GM10248 (cell line): ENCODE measurements at regions of chr14 and their contacts with region 1.

Region 1: DNA sequence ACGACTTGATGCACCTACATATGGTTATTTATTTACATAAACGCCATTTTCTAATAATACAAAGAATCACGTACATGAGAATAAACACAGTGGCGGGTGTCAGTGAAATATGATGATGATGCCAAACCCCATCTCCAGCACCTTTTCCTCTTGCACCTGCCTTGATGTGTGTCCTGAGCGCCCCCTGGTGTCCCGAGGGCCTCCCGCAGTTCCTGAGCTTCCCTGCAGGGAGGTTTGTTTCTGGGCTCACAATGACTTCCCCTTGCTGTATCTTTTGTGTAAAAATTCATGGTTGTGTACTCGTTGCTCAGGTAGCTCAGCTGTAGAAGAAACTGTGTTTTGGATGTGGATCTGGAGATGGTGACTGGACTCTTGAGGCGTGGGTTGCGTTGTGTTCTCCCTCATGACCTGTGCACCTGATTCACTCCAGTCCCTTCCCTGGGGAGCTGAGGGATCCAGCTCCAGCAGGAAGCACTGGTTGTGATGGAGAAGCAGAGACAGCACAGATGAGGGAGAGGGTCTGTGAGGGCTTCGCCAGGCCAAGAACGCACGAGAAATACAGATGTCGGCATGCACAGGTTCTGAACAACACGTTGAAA is 1037.8 kb downstream of the TMEM121 start:
- DNase-seq: peak; percentile 62
- CTCF ChIP-seq: peak; percentile 87

Region 2: GRCh38 chr14:106551263-106551662 is 12.9 kb before region 1 on chr14:
- CTCF ChIA-PET with region 1: interaction called, 35 read pairs
- POLR2A ChIA-PET with region 1: no interaction called
- DNase-seq: no peak
- CTCF ChIP-seq: peak; percentile 3

Region 3: DNA sequence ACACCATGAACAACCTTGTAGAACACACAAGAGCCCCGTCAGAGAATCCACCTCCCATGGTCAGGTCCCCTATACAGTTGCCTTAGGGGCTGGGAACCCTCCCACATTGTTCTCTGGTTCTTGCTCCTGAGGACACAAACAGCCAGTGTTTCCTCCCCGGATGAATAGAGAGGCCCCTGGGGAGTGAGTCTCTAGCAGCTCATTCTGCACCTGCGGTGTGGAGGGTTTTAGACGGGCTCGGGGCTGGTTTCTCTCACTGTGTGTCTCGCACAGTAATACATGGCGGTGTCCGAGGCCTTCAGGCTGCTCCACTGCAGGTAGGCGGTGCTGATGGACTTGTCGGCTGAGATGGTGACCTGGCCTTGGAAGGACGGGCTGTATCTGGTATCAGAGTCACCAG is 14.3 kb after region 1 on chr14:
- CTCF ChIA-PET with region 1: interaction called, 79 read pairs
- POLR2A ChIA-PET with region 1: no interaction called
- DNase-seq: no peak
- CTCF ChIP-seq: no peak

Region 4: GRCh38 chr14:106586098-106586704 is 22.0 kb after region 1 on chr14:
- CTCF ChIA-PET with region 1: interaction called, 79 read pairs
- POLR2A ChIA-PET with region 1: no interaction called
- DNase-seq: peak; percentile 75
- CTCF ChIP-seq: peak; percentile 85

Region 5: DNA sequence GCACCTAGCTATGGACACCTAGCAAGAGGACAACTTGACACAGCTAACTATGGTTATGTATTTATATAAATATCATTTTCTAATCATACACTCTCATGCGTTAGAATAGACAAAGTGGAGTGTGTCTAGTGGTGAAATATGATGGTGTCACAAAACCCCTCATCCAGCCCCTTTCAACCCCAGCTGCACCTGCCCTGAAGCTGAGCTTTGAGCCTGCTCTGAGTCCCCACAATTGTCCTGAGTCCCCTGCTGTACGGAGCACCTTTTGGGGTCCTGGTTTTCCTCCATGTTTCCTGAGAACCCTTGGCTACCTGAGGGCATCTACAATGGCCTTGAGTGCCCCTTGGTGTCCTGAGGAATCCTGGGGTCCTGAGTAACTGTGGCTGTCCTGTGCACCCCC is 35.1 kb after region 1 on chr14:
- CTCF ChIA-PET with region 1: interaction called, 32 read pairs
- POLR2A ChIA-PET with region 1: no interaction called
- DNase-seq: no peak
- CTCF ChIP-seq: no peak